Left cardiac atrium (tissue), 4 donors: ENCODE measurements at regions of chr7 and their contacts with region 1.

Region 1: GRCh38 chr7:128821724-128822123 is 8.5 kb upstream of the FLNC start:
- DNase-seq: no peak
- ATAC-seq: peak in 1 of 2 donors; percentile 13

Region 2: GRCh38 chr7:128788446-128789412 is 33.0 kb before region 1 on chr7:
- intact Hi-C with region 1: loop called in 1 of 2 experiments (anchors 5 kb)
- DNase-seq: no peak
- ATAC-seq: no peak

Region 3: GRCh38 chr7:129454249-129454551 is 632.5 kb after region 1 on chr7:
- intact Hi-C with region 1: no loop called
- DNase-seq: no peak
- ATAC-seq: peak in 1 of 2 donors; percentile 14